Left cardiac atrium (tissue), 4 donors: ENCODE measurements at regions of chr2 and their contacts with region 1.

Region 1: DNA sequence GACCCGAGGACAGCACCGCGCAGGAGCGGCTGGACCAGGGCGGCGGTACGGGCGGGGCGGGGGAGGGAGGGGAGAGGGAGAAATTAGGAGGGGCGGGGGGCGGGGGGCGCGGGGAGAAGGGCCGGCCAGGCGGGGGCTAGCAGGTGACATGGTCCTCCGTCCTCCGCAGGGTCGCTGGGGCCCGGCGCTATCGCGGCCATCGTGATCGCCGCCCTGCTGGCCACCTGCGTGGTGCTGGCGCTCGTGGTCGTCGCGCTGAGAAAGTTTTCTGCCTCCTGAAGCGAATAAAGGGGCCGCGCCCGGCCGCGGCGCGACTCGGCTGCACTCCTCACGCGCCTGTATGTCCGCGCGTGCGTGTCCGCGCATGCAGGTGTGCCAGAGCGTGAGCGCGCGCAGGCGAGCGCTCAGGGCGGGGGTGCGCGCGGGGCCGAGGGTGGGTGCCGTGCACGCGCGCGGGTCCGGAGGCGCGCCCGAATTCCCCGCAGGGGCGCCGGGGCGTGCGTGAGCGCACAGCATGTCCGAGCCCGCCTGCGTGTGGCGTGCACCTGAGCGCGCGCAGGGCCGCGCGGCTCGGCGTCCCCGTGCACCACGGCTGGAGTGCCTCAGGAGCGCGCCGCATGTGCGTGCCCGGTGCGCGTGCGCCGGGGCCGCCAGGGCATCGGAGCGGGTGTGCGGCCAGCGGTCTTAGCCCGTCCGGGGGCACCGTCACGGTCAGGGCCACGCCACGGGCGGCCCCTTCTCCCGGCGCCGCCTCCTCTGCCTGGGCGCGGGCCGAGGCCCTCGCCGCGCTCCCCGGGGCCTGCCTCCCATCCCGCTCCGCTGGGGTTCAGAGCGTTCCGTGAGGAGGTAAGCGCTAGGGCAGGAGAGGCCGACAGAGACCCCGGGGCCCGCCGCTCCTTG is 6.3 kb downstream of the SNORC start:
- DNase-seq: no peak
- ATAC-seq: peak; percentile 39 to 64

Region 2: GRCh38 chr2:233053928-233054784 is 177.8 kb after region 1 on chr2:
- intact Hi-C with region 1: loop called in 1 of 2 experiments (anchors 10 kb)
- DNase-seq: peak; percentile 70
- ATAC-seq: peak; percentile 50 to 55